Posterior vena cava (tissue), 2 donors: ENCODE measurements at regions of chr12 and their contacts with region 1.

Region 1: GRCh38 chr12:810671-811415 is 58.5 kb downstream of the WNK1 start:
- DNase-seq: no peak

Region 2: DNA sequence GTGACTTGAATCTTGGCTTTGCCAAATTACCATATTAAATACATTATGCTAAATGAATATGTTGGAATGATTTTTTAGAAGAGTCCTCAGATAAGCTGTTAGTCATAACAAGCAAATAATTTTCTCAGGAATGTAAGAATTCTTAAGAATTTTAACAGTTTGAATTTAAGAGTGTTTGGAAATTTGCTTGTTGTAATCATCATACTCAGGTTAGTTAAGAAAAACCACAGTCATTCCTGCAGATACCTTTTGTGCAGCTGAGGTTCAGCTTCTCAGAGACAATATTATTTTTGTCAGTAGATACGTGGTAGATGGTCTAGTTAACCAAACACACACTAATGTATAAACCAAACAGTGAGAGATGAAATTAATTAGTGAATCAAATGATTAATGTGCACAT is 49.6 kb before region 1 on chr12:
- intact Hi-C with region 1: loop called in 1 of 2 experiments (anchors 5 kb)
- DNase-seq: no peak